ENCODE measurements at regions of chr16 and their contacts with region 1.

Region 1: DNA sequence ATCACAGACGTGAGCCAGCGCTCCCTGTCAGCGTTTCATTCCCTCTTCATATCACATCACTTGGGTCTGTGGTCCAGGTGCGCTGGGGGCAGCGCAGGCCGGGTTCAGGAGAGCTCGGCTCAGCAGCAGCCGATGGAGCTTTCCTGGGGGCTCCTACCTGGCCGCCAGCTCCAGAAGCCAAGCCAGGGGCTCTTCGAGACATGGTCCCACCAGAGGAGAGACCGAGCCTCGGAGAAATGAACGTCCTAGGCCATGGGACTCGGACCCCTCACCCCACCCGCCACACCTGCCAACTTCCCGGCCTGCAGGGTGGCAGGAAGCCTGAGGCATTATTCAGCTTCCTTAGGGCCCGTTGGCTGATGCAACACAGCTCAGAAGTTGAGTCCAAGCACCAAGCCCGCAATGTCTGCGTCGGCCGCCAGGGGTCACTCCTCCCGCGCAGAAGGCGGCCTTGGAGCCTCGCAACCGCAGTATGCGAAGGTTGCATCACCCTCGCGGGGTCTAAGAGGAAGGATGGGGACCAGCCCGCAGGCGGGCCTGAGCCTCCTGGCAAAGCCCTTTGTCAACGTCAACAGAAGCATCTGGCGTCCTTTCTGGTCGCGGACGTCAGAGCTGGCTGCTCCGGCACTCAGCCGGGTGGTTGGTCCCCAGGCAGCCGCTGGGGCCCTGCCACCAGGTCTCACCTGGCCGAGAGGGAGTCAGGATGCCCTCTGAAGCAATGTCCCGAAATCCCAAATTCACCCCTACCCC is 13.2 kb upstream of the KLHDC4 start:
- DNase-seq: peak; percentile 98
- H3K4me3 Mint-ChIP-seq: peak overlapping the region; percentile 77
- H3K27ac Mint-ChIP-seq: peak overlapping the region; percentile 96
- H3K4me1 Mint-ChIP-seq: peaks cover 48% of the 10 kb centered on the region
- H3K27me3 Mint-ChIP-seq: no peaks in the 10 kb centered on the region

Region 2: GRCh38 chr16:87790278-87791032 is 11.4 kb after region 1 on chr16:
- intact Hi-C with region 1: no loop called
- DNase-seq: no peak
- H3K4me3 Mint-ChIP-seq: no peak overlapping the region
- H3K27ac Mint-ChIP-seq: no peak overlapping the region
- H3K4me1 Mint-ChIP-seq: peaks cover 2% of the 10 kb centered on the region
- H3K27me3 Mint-ChIP-seq: peaks cover 2% of the 10 kb centered on the region

Region 3: GRCh38 chr16:87806603-87807546 is 27.9 kb after region 1 on chr16:
- intact Hi-C with region 1: loop called (anchors 1 kb)
- DNase-seq: peak; percentile 86
- H3K4me3 Mint-ChIP-seq: peak overlapping the region; percentile 85
- H3K27ac Mint-ChIP-seq: peak overlapping the region; percentile 96
- H3K4me1 Mint-ChIP-seq: peaks cover 32% of the 10 kb centered on the region
- H3K27me3 Mint-ChIP-seq: peaks cover 2% of the 10 kb centered on the region

Region 4: GRCh38 chr16:87853411-87854052 is 74.5 kb after region 1 on chr16:
- intact Hi-C with region 1: loop called (anchors 1 kb)
- DNase-seq: peak; percentile 97
- H3K4me3 Mint-ChIP-seq: peak overlapping the region; percentile 77
- H3K27ac Mint-ChIP-seq: peak overlapping the region; percentile 89
- H3K4me1 Mint-ChIP-seq: peaks cover 51% of the 10 kb centered on the region
- H3K27me3 Mint-ChIP-seq: no peaks in the 10 kb centered on the region

Region 5: GRCh38 chr16:87895641-87896141 is 116.7 kb after region 1 on chr16:
- intact Hi-C with region 1: loop called (anchors 1 kb)
- DNase-seq: peak; percentile 94
- H3K4me3 Mint-ChIP-seq: peak overlapping the region; percentile 72
- H3K27ac Mint-ChIP-seq: peak overlapping the region; percentile 100
- H3K4me1 Mint-ChIP-seq: peaks cover 42% of the 10 kb centered on the region
- H3K27me3 Mint-ChIP-seq: no peaks in the 10 kb centered on the region

Region 6: DNA sequence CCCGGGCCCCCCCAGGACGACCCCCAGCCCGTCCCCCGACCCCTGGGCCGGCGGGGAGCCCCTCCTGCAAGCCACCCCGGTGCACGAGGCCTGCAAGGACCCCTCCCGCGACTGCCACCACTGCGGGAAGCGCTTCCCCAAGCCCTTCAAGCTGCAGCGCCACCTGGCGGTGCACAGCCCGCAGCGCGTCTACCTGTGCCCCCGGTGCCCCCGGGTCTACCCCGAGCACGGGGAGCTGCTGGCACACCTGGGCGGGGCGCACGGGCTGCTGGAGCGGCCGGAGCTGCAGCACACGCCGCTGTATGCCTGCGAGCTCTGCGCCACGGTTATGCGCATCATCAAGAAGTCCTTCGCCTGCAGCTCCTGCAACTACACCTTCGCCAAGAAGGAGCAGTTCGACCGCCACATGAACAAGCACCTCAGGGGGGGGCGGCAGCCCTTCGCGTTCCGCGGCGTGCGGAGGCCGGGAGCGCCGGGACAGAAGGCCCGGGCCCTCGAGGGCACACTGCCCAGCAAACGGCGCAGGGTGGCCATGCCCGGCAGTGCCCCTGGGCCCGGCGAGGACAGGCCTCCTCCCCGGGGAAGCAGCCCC is 658.5 kb after region 1 on chr16:
- intact Hi-C with region 1: loop called (anchors 10 kb)
- DNase-seq: peak; percentile 90
- H3K4me3 Mint-ChIP-seq: no peak overlapping the region
- H3K27ac Mint-ChIP-seq: no peak overlapping the region
- H3K4me1 Mint-ChIP-seq: no peaks in the 10 kb centered on the region
- H3K27me3 Mint-ChIP-seq: no peaks in the 10 kb centered on the region

Measured in activated CD4-positive, alpha-beta T cell treated with anti-CD3 and anti-CD28 coated beads, Interleukin-2, amount 10 ng/mL, durations not matched to agents 24 days and 14 days (primary cell).